ENCODE measurements at regions of chr1 and their contacts with region 1.

Region 1: GRCh38 chr1:169367486-169368405 is at the starts of genes BLZF1 and NME7:
- DNase-seq: peak; percentile 99
- ATAC-seq: peak; percentile 93
- H3K4me3 Mint-ChIP-seq: no peak within 1 kb of the TSS
- H3K27ac Mint-ChIP-seq: no peak within 1 kb of the TSS
- H3K4me1 Mint-ChIP-seq: peaks cover 31% of the 10 kb centered on the region
- H3K27me3 Mint-ChIP-seq: no peaks in the 10 kb centered on the region
- total RNA-seq, gene BLZF1: 6.5 to 7.1 TPM
- total RNA-seq, gene NME7: 11.6 to 15.3 TPM

Region 2: DNA sequence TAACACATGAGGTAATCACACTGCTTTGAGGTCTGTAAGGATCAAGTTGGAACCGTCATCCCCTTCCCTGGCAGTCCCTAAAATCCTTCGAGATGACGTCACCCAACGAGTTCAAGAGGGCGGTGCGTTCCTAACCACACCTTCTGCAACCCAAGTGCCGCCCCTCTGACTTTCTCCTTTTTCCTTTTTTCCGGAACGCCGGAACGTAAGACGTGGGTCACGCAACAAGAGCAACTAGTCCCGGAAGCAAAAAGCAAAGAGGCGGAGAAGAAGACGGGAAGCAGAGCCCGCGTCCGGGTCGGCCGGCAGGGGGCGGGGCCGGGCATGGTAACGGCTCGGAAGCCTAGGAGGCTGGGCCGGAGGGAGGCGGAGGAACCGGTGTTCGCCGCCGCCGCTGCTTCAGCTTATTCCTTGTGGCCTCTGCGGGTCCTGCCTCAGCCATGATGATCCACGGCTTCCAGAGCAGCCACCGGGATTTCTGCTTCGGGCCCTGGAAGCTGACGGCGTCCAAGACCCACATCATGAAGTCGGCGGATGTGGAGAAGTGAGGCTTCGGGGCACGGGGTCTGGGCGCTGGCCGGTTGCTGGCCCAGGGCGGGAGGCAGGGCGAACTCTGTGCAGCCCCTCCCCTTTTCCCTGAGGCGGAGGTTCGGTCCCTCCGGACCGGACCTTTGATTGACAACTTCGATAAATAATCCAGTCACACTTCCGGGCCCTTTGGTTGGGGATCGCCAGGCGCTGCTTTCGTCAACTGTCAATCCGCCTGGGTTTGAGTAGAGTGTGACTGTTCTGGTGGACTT is 1188.9 kb before region 1 on chr1 and contains the start of gene TIPRL:
- CTCF ChIA-PET with region 1: no interaction called
- POLR2A ChIA-PET with region 1: no interaction called
- intact Hi-C with region 1: loop called in 1 of 2 experiments (anchors 2 kb)
- DNase-seq: peak; percentile 97
- ATAC-seq: peak; percentile 90
- H3K4me3 Mint-ChIP-seq: no peak within 1 kb of the TSS
- H3K27ac Mint-ChIP-seq: no peak within 1 kb of the TSS
- H3K4me1 Mint-ChIP-seq: peaks cover 9% of the 10 kb centered on the region
- H3K27me3 Mint-ChIP-seq: no peaks in the 10 kb centered on the region
- total RNA-seq, gene TIPRL: 52.5 to 57.5 TPM

Region 3: GRCh38 chr1:169044971-169045370 is 322.8 kb before region 1 on chr1:
- CTCF ChIA-PET with region 1: no interaction called
- POLR2A ChIA-PET with region 1: no interaction called
- intact Hi-C with region 1: loop called in 1 of 2 experiments (anchors 5 kb)
- DNase-seq: no peak
- ATAC-seq: no peak
- H3K4me3 Mint-ChIP-seq: no peak overlapping the region
- H3K27ac Mint-ChIP-seq: peak overlapping the region; percentile 30
- H3K4me1 Mint-ChIP-seq: peaks cover 67% of the 10 kb centered on the region
- H3K27me3 Mint-ChIP-seq: no peaks in the 10 kb centered on the region

Region 4: GRCh38 chr1:169312084-169312954 is 55.4 kb before region 1 on chr1:
- CTCF ChIA-PET with region 1: no interaction called
- POLR2A ChIA-PET with region 1: no interaction called
- intact Hi-C with region 1: no loop called
- DNase-seq: peak; percentile 44
- ATAC-seq: peak; percentile 94
- H3K4me3 Mint-ChIP-seq: no peak overlapping the region
- H3K27ac Mint-ChIP-seq: peak overlapping the region; percentile 31
- H3K4me1 Mint-ChIP-seq: peaks cover 17% of the 10 kb centered on the region
- H3K27me3 Mint-ChIP-seq: no peaks in the 10 kb centered on the region

Region 5: GRCh38 chr1:169390303-169390702 is 22.6 kb after region 1 on chr1:
- CTCF ChIA-PET with region 1: no interaction called
- POLR2A ChIA-PET with region 1: no interaction called
- intact Hi-C with region 1: loop called (anchors 1 kb)
- DNase-seq: no peak
- ATAC-seq: peak; percentile 92
- H3K4me3 Mint-ChIP-seq: no peak overlapping the region
- H3K27ac Mint-ChIP-seq: no peak overlapping the region
- H3K4me1 Mint-ChIP-seq: peaks cover 12% of the 10 kb centered on the region
- H3K27me3 Mint-ChIP-seq: no peaks in the 10 kb centered on the region

Region 6: DNA sequence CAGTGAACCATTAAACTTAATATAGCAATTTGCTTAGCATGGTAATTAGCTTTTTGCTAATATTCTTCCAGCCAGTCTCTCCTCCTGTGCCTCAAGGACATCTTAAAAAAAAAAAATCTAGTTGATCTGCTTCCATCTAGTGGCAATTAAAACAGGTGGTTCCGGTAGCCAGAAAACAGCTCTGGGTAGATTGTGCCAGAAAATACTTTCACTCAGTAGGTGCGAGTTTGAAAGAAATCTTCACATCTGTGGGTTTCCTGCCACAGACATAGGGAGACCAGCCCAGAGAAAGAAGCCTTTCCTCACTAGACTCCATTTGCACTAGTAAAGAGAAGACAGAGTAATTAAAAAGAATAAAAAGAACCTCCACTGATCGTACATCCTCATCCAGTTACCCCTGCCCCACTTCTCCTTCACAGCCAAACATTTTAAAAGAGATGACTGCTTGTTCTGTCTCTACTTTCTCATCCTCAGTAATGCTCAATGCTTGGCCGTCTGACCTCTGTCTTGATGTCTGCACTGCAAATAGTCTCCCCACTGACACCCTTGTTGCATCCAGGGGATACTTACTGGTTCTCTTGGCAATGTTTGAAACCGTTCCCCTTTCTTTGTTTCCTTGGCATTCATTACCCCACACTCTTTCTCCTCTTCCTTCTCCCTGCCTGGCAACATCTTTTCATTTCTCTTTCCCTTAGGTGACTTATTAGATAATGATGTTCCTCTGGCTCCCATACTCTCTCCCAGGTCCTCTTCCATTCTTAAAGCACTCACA is 326.7 kb after region 1 on chr1:
- CTCF ChIA-PET with region 1: no interaction called
- POLR2A ChIA-PET with region 1: no interaction called
- intact Hi-C with region 1: loop called in 1 of 2 experiments (anchors 5 kb)
- DNase-seq: peak; percentile 52
- ATAC-seq: peak; percentile 26
- H3K4me3 Mint-ChIP-seq: peak overlapping the region; percentile 39
- H3K27ac Mint-ChIP-seq: peak overlapping the region; percentile 95
- H3K4me1 Mint-ChIP-seq: peaks cover 97% of the 10 kb centered on the region
- H3K27me3 Mint-ChIP-seq: no peaks in the 10 kb centered on the region

Region 7: GRCh38 chr1:169893494-169894362 is 526.0 kb after region 1 on chr1 and contains the start of gene SCYL3:
- CTCF ChIA-PET with region 1: no interaction called
- POLR2A ChIA-PET with region 1: no interaction called
- intact Hi-C with region 1: loop called (anchors 1 to 2 kb)
- DNase-seq: peak; percentile 92
- ATAC-seq: peak; percentile 87
- H3K4me3 Mint-ChIP-seq: peak within 1 kb of the TSS; percentile 80
- H3K27ac Mint-ChIP-seq: peak within 1 kb of the TSS; percentile 99
- H3K4me1 Mint-ChIP-seq: peaks cover 44% of the 10 kb centered on the region
- H3K27me3 Mint-ChIP-seq: no peaks in the 10 kb centered on the region
- total RNA-seq, gene SCYL3: 11.0 to 12.0 TPM